ENCODE measurements at regions of chr17 and their contacts with region 1.

Region 1: DNA sequence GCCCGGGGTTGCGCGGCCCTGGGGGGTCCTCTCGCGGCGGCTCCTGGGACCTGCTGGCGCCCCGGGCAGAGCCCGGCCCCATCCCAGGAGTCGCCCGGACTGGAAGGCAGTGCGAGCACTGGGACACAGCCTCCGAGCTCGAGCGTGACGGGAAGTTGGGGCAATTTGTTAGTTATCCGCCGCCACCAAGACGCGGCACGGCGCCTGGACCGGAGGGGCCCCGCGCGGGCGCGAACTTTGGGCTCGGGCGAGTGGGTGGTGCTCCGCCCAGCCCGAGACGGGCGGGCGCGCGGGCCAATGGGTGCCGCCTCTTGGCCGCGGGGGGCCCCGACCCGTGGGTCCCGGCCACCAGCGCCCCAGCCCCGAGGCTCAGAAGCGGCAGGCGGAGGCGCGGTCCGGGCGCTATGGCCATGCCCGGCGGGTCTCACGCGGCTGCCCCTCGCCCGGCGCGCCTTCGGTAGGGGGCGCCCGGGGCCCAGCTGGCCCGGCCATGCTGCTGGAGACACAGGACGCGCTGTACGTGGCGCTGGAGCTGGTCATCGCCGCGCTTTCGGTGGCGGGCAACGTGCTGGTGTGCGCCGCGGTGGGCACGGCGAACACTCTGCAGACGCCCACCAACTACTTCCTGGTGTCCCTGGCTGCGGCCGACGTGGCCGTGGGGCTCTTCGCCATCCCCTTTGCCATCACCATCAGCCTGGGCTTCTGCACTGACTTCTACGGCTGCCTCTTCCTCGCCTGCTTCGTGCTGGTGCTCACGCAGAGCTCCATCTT is at the start of gene ADORA2B:
- DNase-seq: peak; percentile 85
- ATAC-seq: peak; percentile 84
- H3K4me3 Mint-ChIP-seq: peak within 1 kb of the TSS; percentile 82
- H3K27ac Mint-ChIP-seq: peak within 1 kb of the TSS; percentile 83
- H3K4me1 Mint-ChIP-seq: peaks cover 11% of the 10 kb centered on the region
- H3K27me3 Mint-ChIP-seq: peaks cover 12% of the 10 kb centered on the region
- total RNA-seq, gene ADORA2B: 4.1 to 4.2 TPM

Region 2: GRCh38 chr17:15659663-15660062 is 285.3 kb before region 1 on chr17:
- POLR2A ChIA-PET with region 1: no interaction called
- DNase-seq: no peak
- ATAC-seq: no peak
- H3K4me3 Mint-ChIP-seq: no peak overlapping the region
- H3K27ac Mint-ChIP-seq: no peak overlapping the region
- H3K4me1 Mint-ChIP-seq: peaks cover 15% of the 10 kb centered on the region
- H3K27me3 Mint-ChIP-seq: no peaks in the 10 kb centered on the region

Region 3: DNA sequence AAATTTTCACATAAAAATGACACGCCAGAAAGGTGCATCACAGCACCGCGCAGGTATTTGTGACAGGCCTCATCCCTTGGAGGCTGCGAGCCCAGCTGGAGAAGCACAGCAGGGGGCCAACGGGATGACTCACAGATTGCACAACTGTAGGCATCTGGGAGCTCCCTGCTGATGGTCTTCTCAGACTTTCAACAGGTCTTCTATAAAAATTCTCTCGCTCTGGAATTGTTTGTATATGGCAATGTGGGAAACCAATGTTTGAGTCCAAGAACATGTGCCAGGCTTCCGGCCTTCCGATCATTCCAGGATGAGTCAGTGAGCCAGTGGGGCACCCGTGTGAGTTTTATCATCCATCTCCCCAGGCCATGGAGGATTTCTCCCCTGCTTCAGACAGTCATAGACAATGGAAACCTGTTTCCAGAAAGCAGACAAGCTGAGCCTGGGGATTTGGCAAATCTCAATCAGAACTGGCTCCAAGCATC is 24.1 kb before region 1 on chr17:
- POLR2A ChIA-PET with region 1: no interaction called
- DNase-seq: no peak
- ATAC-seq: no peak
- H3K4me3 Mint-ChIP-seq: no peak overlapping the region
- H3K27ac Mint-ChIP-seq: no peak overlapping the region
- H3K4me1 Mint-ChIP-seq: no peaks in the 10 kb centered on the region
- H3K27me3 Mint-ChIP-seq: peaks cover 32% of the 10 kb centered on the region

Region 4: GRCh38 chr17:15958484-15958854 is 13.5 kb after region 1 on chr17:
- POLR2A ChIA-PET with region 1: interaction called, 14 read pairs
- DNase-seq: no peak
- ATAC-seq: no peak
- H3K4me3 Mint-ChIP-seq: peak overlapping the region; percentile 66
- H3K27ac Mint-ChIP-seq: peak overlapping the region; percentile 91
- H3K4me1 Mint-ChIP-seq: peaks cover 36% of the 10 kb centered on the region
- H3K27me3 Mint-ChIP-seq: peaks cover 3% of the 10 kb centered on the region

Region 5: GRCh38 chr17:15999439-16000350 is 54.8 kb after region 1 on chr17 and contains the starts of genes TTC19 and ZSWIM7:
- POLR2A ChIA-PET with region 1: interaction called, 37 read pairs
- DNase-seq: peak; percentile 97
- ATAC-seq: peak; percentile 92
- H3K4me3 Mint-ChIP-seq: peak within 1 kb of the TSS; percentile 97
- H3K27ac Mint-ChIP-seq: peak within 1 kb of the TSS; percentile 99
- H3K4me1 Mint-ChIP-seq: peaks cover 26% of the 10 kb centered on the region
- H3K27me3 Mint-ChIP-seq: no peaks in the 10 kb centered on the region
- total RNA-seq, gene TTC19: 32.5 to 36.7 TPM
- total RNA-seq, gene ZSWIM7: 19.6 to 21.8 TPM

Measured in activated naive CD8-positive, alpha-beta T cell treated with anti-CD3 and anti-CD28 coated beads, Interleukin-2, amount 10 ng/mL, durations not matched to agents 7 days and 5 days (primary cell).